HepG2 (cell line): ENCODE measurements at regions of chr12 and their contacts with region 1.

Region 1: DNA sequence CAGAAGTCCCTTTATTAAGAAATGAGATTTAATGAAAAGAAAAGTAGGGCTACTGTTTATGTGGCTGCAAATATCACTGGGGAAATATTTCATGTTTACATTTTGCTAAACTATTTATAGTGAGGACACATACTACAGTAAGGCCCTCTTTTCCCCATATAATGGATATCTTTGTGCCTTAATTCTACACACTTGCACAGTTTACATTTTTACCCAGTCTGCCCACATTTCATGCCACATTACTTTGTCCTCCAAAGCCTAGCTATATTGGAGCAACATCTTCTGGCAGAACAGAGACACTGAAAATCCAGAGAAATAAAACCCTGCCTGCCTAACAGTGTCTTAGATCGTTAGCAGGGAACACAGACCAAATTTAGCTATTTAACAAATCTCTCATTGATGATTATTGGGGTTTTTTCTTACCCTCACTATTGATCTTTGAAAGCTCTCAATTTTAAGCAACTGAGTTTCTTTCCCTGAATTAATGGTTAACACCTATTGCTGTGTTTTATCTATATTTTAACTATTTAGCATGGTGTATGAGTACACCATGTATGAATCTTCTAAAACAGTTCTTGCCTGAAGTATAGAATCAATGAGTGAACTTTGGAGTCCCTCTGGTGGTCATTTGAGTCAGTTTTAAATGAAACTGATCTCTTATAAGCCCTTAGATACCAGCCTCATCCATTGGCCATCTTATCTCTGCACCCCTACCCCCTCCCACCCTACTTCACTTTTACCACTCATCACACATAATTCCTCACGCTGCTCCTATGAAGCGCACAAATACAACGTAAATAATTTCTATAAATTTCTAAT is 170.2 kb downstream of the BCAT1 start:
- DNase-seq: peak; percentile 58
- ATAC-seq: peak; percentile 83
- H3K4me3 ChIP-seq: no peak overlapping the region
- H3K27ac ChIP-seq: no peak overlapping the region
- H3K4me1 ChIP-seq: peaks cover 10% of the 10 kb centered on the region
- H3K27me3 ChIP-seq: no peaks in the 10 kb centered on the region
- CTCF ChIP-seq: peak; percentile 70
- EP300 ChIP-seq: no peak
- POLR2A ChIP-seq: no peak
- RAD21 ChIP-seq: no peak

Region 2: GRCh38 chr12:22856178-22856577 is 1922.5 kb before region 1 on chr12:
- CTCF ChIA-PET with region 1: no interaction called
- POLR2A ChIA-PET with region 1: no interaction called
- in situ Hi-C with region 1: loop called (anchors 25 kb)
- intact Hi-C with region 1: no loop called
- DNase-seq: peak; percentile 20
- ATAC-seq: no peak
- H3K4me3 ChIP-seq: no peak overlapping the region
- H3K27ac ChIP-seq: no peak overlapping the region
- H3K4me1 ChIP-seq: no peaks in the 10 kb centered on the region
- H3K27me3 ChIP-seq: no peaks in the 10 kb centered on the region
- CTCF ChIP-seq: peak; percentile 59
- EP300 ChIP-seq: no peak
- POLR2A ChIP-seq: no peak
- RAD21 ChIP-seq: 0 out of 2 replicates have a peak, but pooled peaks have one; percentile 18

Region 3: GRCh38 chr12:24012528-24012927 is 766.2 kb before region 1 on chr12:
- CTCF ChIA-PET with region 1: no interaction called
- POLR2A ChIA-PET with region 1: no interaction called
- in situ Hi-C with region 1: no loop called
- intact Hi-C with region 1: loop called (anchors 1 kb)
- DNase-seq: peak; percentile 28
- ATAC-seq: peak; percentile 37; the same call in 2 of the 3 replicates
- H3K4me3 ChIP-seq: no peak overlapping the region
- H3K27ac ChIP-seq: no peak overlapping the region
- H3K4me1 ChIP-seq: peaks cover 35% of the 10 kb centered on the region
- H3K27me3 ChIP-seq: no peaks in the 10 kb centered on the region
- CTCF ChIP-seq: peak; percentile 64
- EP300 ChIP-seq: no peak
- POLR2A ChIP-seq: no peak
- RAD21 ChIP-seq: no peak

Region 4: GRCh38 chr12:24596768-24597388 is 181.8 kb before region 1 on chr12:
- CTCF ChIA-PET with region 1: interaction called, 7 read pairs
- POLR2A ChIA-PET with region 1: no interaction called
- in situ Hi-C with region 1: loop called (anchors 10 kb)
- intact Hi-C with region 1: loop called (anchors 1 kb)
- DNase-seq: peak; percentile 24
- ATAC-seq: no peak
- H3K4me3 ChIP-seq: no peak overlapping the region
- H3K27ac ChIP-seq: no peak overlapping the region
- H3K4me1 ChIP-seq: no peaks in the 10 kb centered on the region
- H3K27me3 ChIP-seq: no peaks in the 10 kb centered on the region; a peak in 1 of 5 replicates
- CTCF ChIP-seq: peak; percentile 71
- EP300 ChIP-seq: no peak
- POLR2A ChIP-seq: no peak
- RAD21 ChIP-seq: no peak

Region 5: DNA sequence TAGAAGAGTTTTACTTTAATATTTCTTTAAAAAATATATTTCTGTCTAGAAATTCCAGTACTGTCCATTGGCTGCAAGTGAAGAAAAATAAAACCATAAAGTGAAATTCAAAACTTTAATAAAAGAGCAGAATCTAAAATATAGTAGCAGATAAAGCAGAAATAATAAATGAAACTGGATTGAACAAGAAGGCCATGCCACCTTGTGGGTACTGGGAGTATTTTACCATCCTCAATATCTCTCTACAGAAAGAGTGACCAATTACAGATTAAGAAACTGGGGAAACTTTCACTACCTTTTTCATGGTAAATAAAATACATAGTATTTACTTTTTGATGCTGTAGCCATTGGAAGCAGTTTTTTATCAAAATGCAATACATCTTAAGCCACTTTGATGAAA is 50.3 kb before region 1 on chr12:
- CTCF ChIA-PET with region 1: no interaction called
- POLR2A ChIA-PET with region 1: no interaction called
- in situ Hi-C with region 1: no loop called
- intact Hi-C with region 1: loop called (anchors 5 kb)
- DNase-seq: peak; percentile 18
- ATAC-seq: no peak
- H3K4me3 ChIP-seq: no peak overlapping the region
- H3K27ac ChIP-seq: no peak overlapping the region
- H3K4me1 ChIP-seq: no peaks in the 10 kb centered on the region
- H3K27me3 ChIP-seq: no peaks in the 10 kb centered on the region
- CTCF ChIP-seq: 0 out of 2 replicates have a peak, but pooled peaks have one; percentile 24
- EP300 ChIP-seq: no peak
- POLR2A ChIP-seq: no peak
- RAD21 ChIP-seq: no peak

Region 6: DNA sequence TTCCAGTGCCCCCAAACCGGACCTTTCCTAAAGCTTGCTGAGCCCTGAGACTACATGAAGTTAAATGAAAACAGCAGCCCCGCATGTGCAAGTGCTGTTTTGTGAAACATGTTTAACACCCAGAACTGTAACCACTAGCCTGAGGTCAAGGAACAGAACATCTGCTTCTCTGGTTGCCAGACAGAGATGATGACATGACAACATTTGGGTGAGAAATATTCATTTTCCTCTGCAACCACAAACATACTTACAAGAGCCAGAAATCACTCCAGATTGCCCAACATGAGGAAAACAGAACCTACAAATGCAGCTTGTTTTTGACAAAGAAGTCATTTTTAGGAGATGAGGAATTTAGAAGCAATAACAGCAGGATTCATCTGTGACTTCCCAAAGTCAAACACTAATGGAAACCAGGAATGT is 59.8 kb after region 1 on chr12:
- CTCF ChIA-PET with region 1: no interaction called
- POLR2A ChIA-PET with region 1: no interaction called
- in situ Hi-C with region 1: no loop called
- intact Hi-C with region 1: loop called (anchors 2 kb)
- DNase-seq: no peak
- ATAC-seq: no peak
- H3K4me3 ChIP-seq: no peak overlapping the region
- H3K27ac ChIP-seq: no peak overlapping the region
- H3K4me1 ChIP-seq: no peaks in the 10 kb centered on the region
- H3K27me3 ChIP-seq: no peaks in the 10 kb centered on the region
- CTCF ChIP-seq: no peak
- EP300 ChIP-seq: no peak
- POLR2A ChIP-seq: no peak
- RAD21 ChIP-seq: no peak